ENCODE measurements at regions of chr6 and their contacts with region 1.

Region 1: GRCh38 chr6:10369881-10370280 is 45.0 kb downstream of the TFAP2A start:
- DNase-seq: peak; percentile 89
- ATAC-seq: peak; percentile 96
- H3K4me3 ChIP-seq: no peak overlapping the region
- H3K27ac ChIP-seq: peak overlapping the region; percentile 46
- H3K4me1 ChIP-seq: peaks cover 12% of the 10 kb centered on the region
- H3K27me3 ChIP-seq: no peaks in the 10 kb centered on the region
- CTCF ChIP-seq: no peak

Region 2: DNA sequence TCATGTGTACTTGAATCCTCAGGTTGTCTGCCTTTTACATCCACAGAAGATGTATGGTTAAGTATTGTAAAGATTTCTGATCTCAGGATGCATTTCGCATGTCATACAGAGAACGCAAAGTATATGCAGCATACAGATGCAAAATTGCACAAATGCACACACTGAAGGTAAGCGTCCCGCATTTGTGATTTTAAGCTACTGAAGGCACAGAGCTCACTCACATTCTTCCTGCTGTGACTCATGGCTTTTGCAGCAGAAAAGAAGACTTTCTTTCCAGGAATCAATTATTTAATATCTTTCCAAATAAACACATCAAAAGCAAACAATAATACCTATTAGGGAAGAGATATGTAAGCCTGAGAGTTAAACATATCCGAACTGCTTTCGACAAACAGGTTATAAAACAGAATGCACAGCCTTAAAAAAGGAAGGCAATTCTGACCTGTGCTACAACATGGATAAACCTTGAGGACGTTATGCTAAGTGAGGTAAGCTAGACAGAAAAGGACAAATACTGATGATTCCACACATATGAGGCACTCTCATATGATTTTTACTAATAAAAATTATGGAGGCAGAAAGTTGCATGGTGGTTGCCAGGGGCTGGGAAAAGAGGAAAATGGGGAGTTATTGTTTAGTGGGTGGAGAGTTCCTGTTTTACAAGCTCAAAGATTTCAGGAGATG is 64.0 kb before region 1 on chr6:
- CTCF ChIA-PET with region 1: no interaction called
- POLR2A ChIA-PET with region 1: no interaction called
- intact Hi-C with region 1: loop called (anchors 2 kb)
- DNase-seq: peak; percentile 40
- ATAC-seq: peak; percentile 72
- H3K4me3 ChIP-seq: peak overlapping the region; percentile 7; the same call in 1 of the 2 replicates
- H3K27ac ChIP-seq: no peak overlapping the region
- H3K4me1 ChIP-seq: peaks cover 16% of the 10 kb centered on the region
- H3K27me3 ChIP-seq: no peaks in the 10 kb centered on the region
- CTCF ChIP-seq: no peak

Region 3: DNA sequence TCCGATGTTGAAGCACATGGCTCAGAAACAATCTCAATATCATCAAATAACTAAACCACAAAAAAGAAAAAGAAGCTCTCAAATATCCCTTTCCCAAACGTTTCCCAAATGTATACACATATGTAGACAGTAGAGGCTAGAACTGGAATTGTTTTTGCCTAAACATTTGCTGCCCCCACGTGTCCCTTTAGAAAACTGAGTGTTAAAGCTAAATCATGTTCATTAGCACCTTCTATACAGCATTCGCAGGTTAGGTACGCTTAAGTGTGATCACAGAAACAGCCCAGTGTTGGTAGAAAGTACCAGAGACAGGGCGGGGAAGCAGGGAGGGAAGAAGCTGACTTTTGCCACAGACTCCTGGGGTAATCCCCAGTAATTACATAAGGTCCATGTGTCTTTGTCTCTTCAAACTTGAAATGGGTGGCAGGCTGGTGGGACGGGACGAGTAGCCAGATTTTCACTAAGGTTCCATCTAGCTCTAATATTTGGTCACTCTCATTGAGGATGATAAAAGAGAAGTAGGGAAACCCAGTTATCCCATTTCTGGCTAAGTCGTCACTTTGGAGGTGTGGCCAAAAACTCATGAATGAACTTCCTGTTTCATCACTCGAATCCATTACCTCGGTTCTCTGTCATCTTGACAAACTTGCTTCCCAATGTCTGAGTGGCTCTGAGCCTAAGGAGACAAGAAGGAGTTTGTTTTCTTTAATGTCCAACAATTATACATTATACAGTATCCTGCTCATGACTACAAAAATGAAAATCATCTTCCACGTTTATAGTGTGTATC is 60.0 kb after region 1 on chr6:
- CTCF ChIA-PET with region 1: no interaction called
- POLR2A ChIA-PET with region 1: no interaction called
- intact Hi-C with region 1: no loop called
- DNase-seq: peak; percentile 75
- ATAC-seq: peak; percentile 92
- H3K4me3 ChIP-seq: peak overlapping the region; percentile 60
- H3K27ac ChIP-seq: no peak overlapping the region
- H3K4me1 ChIP-seq: peaks cover 20% of the 10 kb centered on the region
- H3K27me3 ChIP-seq: no peaks in the 10 kb centered on the region
- CTCF ChIP-seq: peak; percentile 90

Region 4: DNA sequence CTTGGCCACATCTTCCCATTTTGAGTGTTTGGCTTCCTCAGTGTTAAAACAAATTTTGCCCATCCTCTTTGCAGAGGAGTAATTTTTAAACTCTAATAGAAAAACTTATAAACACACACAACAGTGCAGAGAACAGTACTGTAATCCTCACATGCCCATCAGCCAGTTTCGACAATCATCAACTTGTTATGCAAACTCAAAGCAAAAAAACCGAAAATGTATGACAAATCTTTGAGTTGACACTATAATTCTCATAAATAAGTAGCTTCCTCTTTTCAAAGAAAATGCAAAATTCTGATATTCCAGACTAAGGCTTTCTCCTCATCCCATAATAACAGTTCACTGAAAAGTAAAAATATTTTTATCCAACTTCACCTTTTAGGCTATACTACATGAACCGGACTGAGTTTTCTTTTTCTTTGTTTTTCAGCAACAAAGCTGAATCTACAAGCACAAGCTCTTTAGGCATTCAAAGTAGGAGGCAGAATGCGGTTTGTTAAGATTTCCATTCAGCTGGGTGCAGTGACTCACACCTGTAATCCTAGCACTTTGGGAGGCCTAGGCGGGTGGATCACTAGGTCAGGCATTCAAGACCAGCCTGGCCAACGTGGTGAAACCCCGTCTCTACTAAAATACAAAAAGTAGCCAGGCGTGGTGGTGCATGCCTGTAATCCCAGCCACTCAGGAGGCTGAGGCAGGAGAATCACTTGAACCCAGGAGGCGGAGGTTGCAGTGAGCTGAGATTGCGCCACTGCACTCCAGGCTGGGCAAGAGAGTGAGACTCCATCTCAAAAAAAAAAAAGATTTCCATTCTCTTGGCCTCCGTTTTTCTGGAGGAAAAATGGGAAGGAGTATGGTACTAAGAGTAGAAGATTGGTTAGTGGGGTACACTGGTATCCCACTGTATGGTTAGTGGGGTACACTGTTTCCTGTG is 226.1 kb after region 1 on chr6:
- CTCF ChIA-PET with region 1: no interaction called
- POLR2A ChIA-PET with region 1: no interaction called
- intact Hi-C with region 1: no loop called
- DNase-seq: peak; percentile 72
- ATAC-seq: peak; percentile 94
- H3K4me3 ChIP-seq: no peak overlapping the region
- H3K27ac ChIP-seq: peak overlapping the region; percentile 8; the same call in 1 of the 2 replicates
- H3K4me1 ChIP-seq: peaks cover 7% of the 10 kb centered on the region; the same call in 1 of the 2 replicates
- H3K27me3 ChIP-seq: no peaks in the 10 kb centered on the region
- CTCF ChIP-seq: no peak